ENCODE measurements at regions of chr10 and their contacts with region 1.

Region 1: DNA sequence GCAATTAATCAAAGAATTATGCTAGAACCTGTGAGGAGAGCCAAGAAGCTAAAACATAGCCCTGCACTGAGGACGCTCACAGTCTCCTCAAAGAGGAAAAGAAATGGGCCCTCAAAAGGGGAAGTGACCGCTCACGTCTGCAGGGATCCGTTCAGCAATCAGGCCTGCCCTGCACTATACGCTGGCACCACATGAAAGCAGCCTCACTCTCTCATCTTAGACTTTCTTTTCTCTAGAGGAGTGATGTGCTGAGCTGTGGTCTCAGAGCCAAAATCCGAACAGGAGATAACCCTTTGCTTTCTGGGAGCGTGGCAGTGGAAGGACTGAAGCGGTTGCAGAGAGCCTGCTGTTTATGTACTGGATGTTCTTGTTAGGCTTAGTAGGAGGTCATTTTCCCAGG is 6.3 kb upstream of the IL2RA start:
- DNase-seq: peak; percentile 60
- CTCF ChIP-seq: no peak

Region 2: GRCh38 chr10:6083523-6084475 is 15.4 kb after region 1 on chr10:
- CTCF ChIA-PET with region 1: interaction called, 133 read pairs
- POLR2A ChIA-PET with region 1: no interaction called
- DNase-seq: no peak
- CTCF ChIP-seq: no peak